H1 (cell line): ENCODE measurements at regions of chr16 and their contacts with region 1.

Region 1: DNA sequence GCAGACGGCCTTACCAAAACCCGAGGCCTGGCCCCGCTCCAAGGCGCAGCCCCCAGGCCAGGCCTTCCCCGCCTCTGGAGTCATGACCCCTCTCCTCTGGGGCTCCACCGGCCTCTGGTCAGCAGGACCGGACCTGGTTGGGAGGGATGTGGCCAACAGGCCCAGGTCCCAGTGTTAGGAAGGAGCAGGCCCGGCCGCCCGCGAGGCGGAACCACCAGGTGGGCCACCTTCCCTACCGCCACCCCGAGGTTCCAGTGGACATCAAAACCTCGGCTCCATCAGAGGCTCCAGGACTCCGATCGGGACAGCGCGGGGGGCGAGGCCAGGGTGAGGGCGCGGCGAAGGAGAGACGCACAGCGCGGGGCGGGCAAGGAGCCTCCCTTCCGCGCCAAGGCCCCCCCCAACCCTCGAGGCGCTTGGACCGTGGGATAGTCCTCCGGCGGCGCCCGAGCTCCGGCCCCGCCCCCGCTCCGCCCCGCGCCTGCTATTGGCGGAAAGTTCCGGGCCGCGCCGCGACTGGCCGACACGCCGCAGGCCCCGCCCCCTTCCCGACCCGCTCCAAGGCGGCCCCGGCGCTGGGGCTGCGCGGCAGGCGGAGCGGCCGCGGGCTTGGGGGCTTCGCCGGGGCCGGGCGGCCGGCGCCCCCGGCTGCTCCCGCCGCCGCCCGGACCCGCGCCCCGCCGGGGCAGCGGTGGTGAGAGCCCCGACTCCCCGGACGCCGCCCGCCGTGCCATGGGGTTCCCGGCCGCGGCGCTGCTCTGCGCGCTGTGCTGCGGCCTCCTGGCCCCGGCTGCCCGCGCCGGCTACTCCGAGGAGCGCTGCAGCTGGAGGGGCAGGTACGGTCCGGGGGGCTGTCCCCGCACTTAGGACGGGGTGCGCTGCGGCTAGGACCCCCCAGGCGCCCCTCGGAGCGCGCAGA is at the start of gene METRN:
- DNase-seq: peak in 1 of 2 experiments; percentile 95
- H3K4me3 ChIP-seq: peak within 1 kb of the TSS; percentile 41 to 74 (median 44); a peak in 7 of 8 replicates
- H3K27ac ChIP-seq: no peak within 1 kb of the TSS
- H3K4me1 ChIP-seq: peaks cover 0 to 23% (median 16%) of the 10 kb centered on the region in 4 experiments; a peak in 5 of 7 replicates
- H3K27me3 ChIP-seq: peaks cover 0 to 51% (median 27%) of the 10 kb centered on the region in 4 experiments; a peak in 6 of 7 replicates
- CTCF ChIP-seq: no peak
- EP300 ChIP-seq: no peak
- POLR2A ChIP-seq: no peak
- RAD21 ChIP-seq: no peak
- total RNA-seq, gene METRN: 18.7 and 19.1 TPM in 2 replicates

Region 2: DNA sequence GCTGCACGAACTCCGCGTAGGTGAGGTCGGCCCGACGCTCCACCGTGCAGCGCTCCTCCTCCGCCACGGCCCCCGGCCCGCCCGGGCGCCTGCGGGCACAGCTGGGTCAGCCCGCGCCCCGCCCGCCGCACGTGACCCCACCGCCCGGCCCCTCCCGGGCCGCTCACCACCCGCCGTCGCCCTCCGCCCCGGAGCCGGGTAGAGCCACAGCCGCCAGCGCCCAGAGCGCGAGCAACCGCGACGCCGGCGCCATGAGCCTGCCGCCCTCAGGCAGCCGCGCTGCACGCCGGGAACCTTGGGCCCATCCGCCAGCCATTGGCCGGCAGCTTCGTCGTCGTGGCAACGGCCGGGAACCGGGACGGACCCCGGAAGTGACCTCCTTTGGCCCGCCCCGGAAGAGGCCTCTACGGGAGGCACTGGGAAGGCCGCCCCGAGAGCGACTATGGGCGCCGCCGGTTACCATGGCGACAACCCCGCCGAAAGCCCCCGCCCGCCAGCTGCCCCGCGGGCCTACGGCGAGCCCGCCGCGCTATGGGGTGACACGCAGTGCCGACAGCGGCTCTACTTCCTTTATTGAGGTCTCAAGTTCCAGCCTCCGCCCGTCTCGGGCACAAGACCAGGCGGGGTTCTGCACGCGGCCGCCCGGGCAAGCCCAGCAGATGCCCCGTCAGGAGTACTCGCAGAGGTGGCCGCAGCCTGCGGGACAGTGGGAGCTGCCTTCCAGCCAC is 30.6 kb before region 1 on chr16 and contains the start of gene JMJD8:
- CTCF ChIA-PET with region 1: interaction called, 8 read pairs
- POLR2A ChIA-PET with region 1: interaction called, 12 read pairs
- DNase-seq: peak; percentile 81 to 98
- H3K4me3 ChIP-seq: peak within 1 kb of the TSS; percentile 62 to 81 (median 74)
- H3K27ac ChIP-seq: peak within 1 kb of the TSS; percentile 73
- H3K4me1 ChIP-seq: peaks cover 0 to 18% (median 13%) of the 10 kb centered on the region in 4 experiments; a peak in 5 of 7 replicates
- H3K27me3 ChIP-seq: no peaks in the 10 kb centered on the region; a peak in 1 of 7 replicates
- CTCF ChIP-seq: no peak
- EP300 ChIP-seq: no peak
- POLR2A ChIP-seq: peak in 1 of 2 experiments; percentile 92; a peak in 2 of 3 replicates
- RAD21 ChIP-seq: no peak
- total RNA-seq, gene JMJD8: 46.4 and 49.0 TPM in 2 replicates

Region 3: GRCh38 chr16:695355-696089 is 19.3 kb before region 1 on chr16:
- CTCF ChIA-PET with region 1: interaction called, 977 read pairs
- POLR2A ChIA-PET with region 1: interaction called, 30 read pairs
- DNase-seq: peak in 1 of 2 experiments; percentile 77
- H3K4me3 ChIP-seq: peak overlapping the region; percentile 47 to 73 (median 52)
- H3K27ac ChIP-seq: no peak overlapping the region
- H3K4me1 ChIP-seq: peaks cover 0 to 13% (median 9%) of the 10 kb centered on the region in 4 experiments; a peak in 4 of 7 replicates
- H3K27me3 ChIP-seq: peaks cover 8 to 76% (median 53%) of the 10 kb centered on the region in 4 experiments
- CTCF ChIP-seq: no peak
- EP300 ChIP-seq: no peak
- POLR2A ChIP-seq: no peak
- RAD21 ChIP-seq: no peak

Region 4: DNA sequence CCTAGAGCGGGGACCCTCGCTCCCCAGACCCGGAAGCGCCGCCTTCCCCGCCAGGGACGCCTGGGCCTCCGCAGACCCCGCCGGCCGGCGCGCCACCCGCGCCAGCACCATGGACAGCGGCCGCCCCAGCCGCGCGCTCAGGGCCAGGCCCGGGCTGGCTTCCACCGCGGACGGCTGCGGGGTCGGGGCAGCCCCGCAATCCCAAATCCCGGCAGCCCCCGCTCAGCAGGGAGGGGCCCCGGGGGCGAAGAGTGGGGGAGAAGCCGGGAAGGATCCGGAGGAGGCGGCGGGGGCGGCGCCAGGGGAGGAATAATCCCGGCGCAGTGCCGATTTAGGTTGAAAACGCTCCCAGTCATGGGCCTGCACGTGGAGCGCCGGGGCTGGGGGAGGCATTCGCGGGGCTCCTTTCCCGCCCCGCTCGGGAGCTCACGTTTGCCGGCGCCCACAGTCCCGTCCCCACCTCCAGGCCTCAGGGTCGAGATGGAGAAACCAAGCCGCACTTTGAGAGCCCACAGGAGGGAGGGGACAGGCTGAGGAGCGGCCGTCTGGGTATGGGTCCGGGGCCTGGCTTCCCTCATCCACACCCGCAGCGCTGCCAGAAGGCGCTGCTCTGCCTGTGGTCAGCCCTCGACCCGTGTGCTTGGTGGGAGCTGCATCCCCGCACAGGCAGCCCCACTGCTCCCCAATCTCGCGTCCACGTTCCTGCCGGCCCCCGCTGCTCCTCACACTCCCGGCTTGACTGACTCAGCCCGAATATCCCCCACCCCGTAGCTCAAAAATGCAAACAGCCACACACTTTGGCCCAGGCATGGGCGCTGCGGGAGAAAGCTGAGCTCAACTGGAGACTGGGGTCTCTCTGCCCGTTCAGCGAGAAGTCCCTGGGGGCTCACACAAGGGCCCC is 13.9 kb before region 1 on chr16:
- CTCF ChIA-PET with region 1: interaction called, 977 read pairs
- POLR2A ChIA-PET with region 1: interaction called, 30 read pairs
- DNase-seq: peak in 1 of 2 experiments; percentile 92
- H3K4me3 ChIP-seq: peak overlapping the region in 1 of 4 experiments; percentile 33; a peak in 2 of 8 replicates
- H3K27ac ChIP-seq: no peak overlapping the region
- H3K4me1 ChIP-seq: peaks cover 0 to 6% (median 1%) of the 10 kb centered on the region in 4 experiments; a peak in 3 of 7 replicates
- H3K27me3 ChIP-seq: peaks cover 45 to 80% (median 72%) of the 10 kb centered on the region in 4 experiments
- CTCF ChIP-seq: 0 out of 4 replicates have a peak, but pooled peaks of 1 of the 3 experiments have one; percentile 3
- EP300 ChIP-seq: no peak
- POLR2A ChIP-seq: no peak
- RAD21 ChIP-seq: peak in 1 of 2 experiments; percentile 1; a peak in 1 of 4 replicates

Region 5: GRCh38 chr16:799948-800833 is 85.4 kb after region 1 on chr16 and contains the start of gene GNG13:
- CTCF ChIA-PET with region 1: interaction called, 11 read pairs
- POLR2A ChIA-PET with region 1: interaction called, 55 read pairs
- DNase-seq: peak in 1 of 2 experiments; percentile 84
- H3K4me3 ChIP-seq: peak within 1 kb of the TSS; percentile 5 to 61 (median 20); a peak in 6 of 8 replicates
- H3K27ac ChIP-seq: no peak within 1 kb of the TSS
- H3K4me1 ChIP-seq: peaks cover 0 to 17% (median 3%) of the 10 kb centered on the region in 4 experiments; a peak in 4 of 7 replicates
- H3K27me3 ChIP-seq: peaks cover 1 to 42% (median 28%) of the 10 kb centered on the region in 4 experiments; a peak in 6 of 7 replicates
- CTCF ChIP-seq: no peak
- EP300 ChIP-seq: no peak
- POLR2A ChIP-seq: no peak
- RAD21 ChIP-seq: no peak
- total RNA-seq, gene GNG13: not detected in 2 replicates

Region 6: DNA sequence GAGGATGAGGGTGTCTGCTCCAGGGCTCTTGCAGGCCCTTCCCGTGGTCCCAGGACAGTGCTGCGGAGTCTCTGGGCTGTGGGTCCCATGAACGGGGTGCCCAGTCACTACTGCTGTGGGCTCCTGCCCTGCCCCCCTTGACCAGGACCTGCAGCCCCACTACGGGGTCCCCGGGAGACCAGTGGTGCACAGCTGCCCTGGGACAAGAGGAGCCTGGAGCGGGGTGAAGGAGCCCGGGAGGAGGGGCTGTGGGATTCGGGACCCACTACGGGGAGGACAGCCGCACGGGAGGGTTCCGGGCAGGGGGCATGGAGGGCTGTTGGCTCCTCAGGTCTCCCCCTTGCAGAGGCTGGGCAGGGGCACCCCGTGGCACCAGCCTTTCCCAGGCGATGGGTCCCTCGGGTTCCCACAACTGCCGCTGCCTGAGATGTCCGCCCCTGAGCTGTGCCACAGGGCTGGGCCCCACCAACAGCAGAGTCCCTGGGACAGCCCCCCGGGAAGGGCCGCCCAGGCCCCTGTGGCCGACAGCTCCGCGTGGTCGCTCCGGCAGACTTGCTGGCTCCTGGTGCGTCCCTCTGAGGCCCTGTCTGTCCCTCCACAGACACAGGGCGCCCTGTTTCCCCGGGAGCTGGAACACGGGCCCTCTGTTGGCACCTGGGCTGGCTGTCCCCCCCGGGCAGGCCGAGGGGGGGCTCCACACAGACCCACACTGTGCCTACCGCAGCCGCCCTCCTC is 137.8 kb after region 1 on chr16:
- CTCF ChIA-PET with region 1: no interaction called
- POLR2A ChIA-PET with region 1: no interaction called
- DNase-seq: no peak
- H3K4me3 ChIP-seq: no peak overlapping the region
- H3K27ac ChIP-seq: no peak overlapping the region
- H3K4me1 ChIP-seq: no peaks in the 10 kb centered on the region
- H3K27me3 ChIP-seq: no peaks in the 10 kb centered on the region; a peak in 1 of 7 replicates
- CTCF ChIP-seq: no peak
- EP300 ChIP-seq: no peak
- POLR2A ChIP-seq: no peak
- RAD21 ChIP-seq: no peak

Region 7: DNA sequence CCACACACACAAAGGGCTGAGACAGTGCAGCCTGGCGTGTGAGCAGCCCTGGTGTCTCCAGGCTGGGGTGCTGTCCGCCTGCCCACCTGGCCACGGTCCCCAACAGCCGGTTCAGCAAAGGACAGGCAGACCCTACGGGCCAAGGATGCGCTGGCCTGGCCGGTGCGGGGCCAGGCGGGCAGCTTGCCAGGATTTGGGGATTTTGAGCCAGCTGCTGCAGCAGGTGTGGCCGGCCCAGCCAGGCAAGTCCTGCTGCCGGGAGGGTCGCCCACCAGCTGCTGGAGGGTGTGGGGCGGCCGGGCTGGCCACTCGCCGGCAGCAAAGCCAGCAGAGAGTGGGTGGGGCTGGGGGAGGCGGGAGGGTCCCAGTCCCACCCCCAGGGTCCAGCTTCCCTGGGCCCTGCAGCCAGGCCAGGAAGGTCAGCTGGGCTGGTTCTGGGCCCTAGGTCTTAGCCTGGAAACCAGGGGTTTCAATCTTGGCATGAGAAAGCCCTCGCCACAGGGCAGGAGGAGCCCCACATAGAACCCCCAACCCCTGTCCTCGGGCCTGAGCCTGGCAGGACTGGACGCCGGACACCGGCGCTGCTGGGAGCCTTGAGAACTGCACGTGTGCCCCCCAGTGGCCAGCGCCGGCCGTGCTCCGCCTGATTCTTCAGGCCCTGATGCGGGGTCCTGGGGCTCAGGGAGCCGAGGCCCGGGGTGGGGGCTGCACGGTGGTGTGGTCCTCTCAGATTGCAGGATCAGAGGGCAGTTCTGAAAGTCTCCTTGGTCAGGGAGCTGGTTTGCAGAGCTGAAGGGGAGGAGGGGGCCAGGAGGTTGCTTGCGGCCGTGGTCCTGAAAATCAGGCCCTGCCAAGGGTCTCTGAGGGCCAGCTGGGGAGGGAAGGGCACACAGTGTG is 340.1 kb after region 1 on chr16:
- CTCF ChIA-PET with region 1: interaction called, 10 read pairs
- POLR2A ChIA-PET with region 1: no interaction called
- DNase-seq: peak in 1 of 2 experiments; percentile 92
- H3K4me3 ChIP-seq: no peak overlapping the region
- H3K27ac ChIP-seq: no peak overlapping the region
- H3K4me1 ChIP-seq: no peaks in the 10 kb centered on the region
- H3K27me3 ChIP-seq: no peaks in the 10 kb centered on the region
- CTCF ChIP-seq: peak; percentile 82 to 91 (median 84)
- EP300 ChIP-seq: no peak
- POLR2A ChIP-seq: no peak
- RAD21 ChIP-seq: peak; percentile 95 to 96